ENCODE measurements at regions of chr1 and their contacts with region 1.

Region 1: GRCh38 chr1:15994590-15995351 is 9.3 kb upstream of the SRARP start:
- DNase-seq: peak; percentile 74 to 82 (median 77)
- ATAC-seq: peak; percentile 89 to 97 (median 92)
- H3K4me3 ChIP-seq: no peak overlapping the region
- H3K27ac ChIP-seq: no peak overlapping the region
- H3K4me1 ChIP-seq: no peaks in the 10 kb centered on the region
- H3K27me3 ChIP-seq: no peaks in the 10 kb centered on the region
- CTCF ChIP-seq: peak; percentile 75 to 83 (median 78)
- POLR2A ChIP-seq: no peak

Region 2: GRCh38 chr1:15809788-15810065 is 185.0 kb before region 1 on chr1:
- intact Hi-C with region 1: loop called in 1 of 2 experiments (anchors 5 kb)
- DNase-seq: no peak
- ATAC-seq: no peak
- H3K4me3 ChIP-seq: no peak overlapping the region
- H3K27ac ChIP-seq: no peak overlapping the region
- H3K4me1 ChIP-seq: no peaks in the 10 kb centered on the region
- H3K27me3 ChIP-seq: no peaks in the 10 kb centered on the region
- CTCF ChIP-seq: no peak
- POLR2A ChIP-seq: no peak

Region 3: DNA sequence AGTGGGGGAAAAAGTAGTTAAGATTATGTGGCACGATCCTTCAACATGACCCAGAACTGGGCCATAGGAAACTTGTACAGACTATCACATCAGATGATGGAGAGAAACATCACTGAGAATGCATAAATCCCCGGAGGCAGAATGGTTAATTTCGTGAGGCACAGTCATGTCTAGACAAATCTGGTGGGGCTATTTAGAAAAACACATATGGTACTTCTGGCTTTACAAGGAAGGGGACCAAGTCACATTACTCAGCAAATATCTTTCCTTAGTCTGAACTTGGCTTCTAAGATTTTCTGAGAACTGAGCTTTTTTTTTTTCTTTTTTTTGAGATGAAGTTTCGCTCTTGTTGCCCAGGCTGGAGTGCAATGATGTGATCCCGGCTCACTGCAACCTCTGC is 178.1 kb before region 1 on chr1:
- intact Hi-C with region 1: loop called in 1 of 2 experiments (anchors 5 kb)
- DNase-seq: no peak
- ATAC-seq: no peak
- H3K4me3 ChIP-seq: no peak overlapping the region
- H3K27ac ChIP-seq: no peak overlapping the region
- H3K4me1 ChIP-seq: peaks cover 0 to 14% (median 0%) of the 10 kb centered on the region in 4 donors
- H3K27me3 ChIP-seq: no peaks in the 10 kb centered on the region
- CTCF ChIP-seq: no peak
- POLR2A ChIP-seq: no peak

Region 4: DNA sequence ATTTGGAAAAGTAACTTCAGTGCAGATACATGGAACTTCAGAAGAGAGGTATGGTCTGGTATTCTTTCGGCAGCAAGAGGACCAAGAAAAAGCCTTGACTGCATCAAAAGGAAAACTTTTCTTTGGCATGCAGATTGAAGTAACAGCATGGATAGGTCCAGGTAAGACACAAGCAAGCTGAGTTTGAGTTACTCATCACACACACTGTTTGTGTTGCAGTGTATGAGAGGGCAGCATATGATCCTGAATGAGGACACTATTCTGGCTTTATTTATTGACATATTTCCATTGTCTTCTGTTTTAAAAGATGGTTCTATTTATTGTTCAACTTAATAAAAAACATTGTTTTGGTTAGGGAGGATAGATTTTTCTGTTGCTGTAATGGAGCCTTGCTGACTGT is 83.6 kb before region 1 on chr1:
- intact Hi-C with region 1: no loop called
- DNase-seq: no peak
- ATAC-seq: no peak
- H3K4me3 ChIP-seq: no peak overlapping the region
- H3K27ac ChIP-seq: no peak overlapping the region
- H3K4me1 ChIP-seq: peaks cover 0 to 4% (median 0%) of the 10 kb centered on the region in 4 donors
- H3K27me3 ChIP-seq: no peaks in the 10 kb centered on the region
- CTCF ChIP-seq: no peak
- POLR2A ChIP-seq: no peak

Measured in right lobe of liver (tissue), 6 donors.